ENCODE measurements at regions of chr2 and their contacts with region 1.

Region 1: GRCh38 chr2:160109936-160110673 is 47.7 kb upstream of the PLA2R1 start:
- DNase-seq: no peak
- H3K27ac ChIP-seq: peak overlapping the region; percentile 83
- CTCF ChIP-seq: peak; percentile 59

Region 2: GRCh38 chr2:160091381-160091780 is 18.7 kb before region 1 on chr2:
- CTCF ChIA-PET with region 1: interaction called, 13 read pairs
- POLR2A ChIA-PET with region 1: no interaction called
- DNase-seq: peak; percentile 92
- H3K27ac ChIP-seq: peak overlapping the region; percentile 99
- CTCF ChIP-seq: no peak

Region 3: GRCh38 chr2:160141912-160142311 is 31.8 kb after region 1 on chr2:
- CTCF ChIA-PET with region 1: no interaction called
- POLR2A ChIA-PET with region 1: no interaction called
- DNase-seq: no peak
- H3K27ac ChIP-seq: no peak overlapping the region
- CTCF ChIP-seq: no peak

Region 4: DNA sequence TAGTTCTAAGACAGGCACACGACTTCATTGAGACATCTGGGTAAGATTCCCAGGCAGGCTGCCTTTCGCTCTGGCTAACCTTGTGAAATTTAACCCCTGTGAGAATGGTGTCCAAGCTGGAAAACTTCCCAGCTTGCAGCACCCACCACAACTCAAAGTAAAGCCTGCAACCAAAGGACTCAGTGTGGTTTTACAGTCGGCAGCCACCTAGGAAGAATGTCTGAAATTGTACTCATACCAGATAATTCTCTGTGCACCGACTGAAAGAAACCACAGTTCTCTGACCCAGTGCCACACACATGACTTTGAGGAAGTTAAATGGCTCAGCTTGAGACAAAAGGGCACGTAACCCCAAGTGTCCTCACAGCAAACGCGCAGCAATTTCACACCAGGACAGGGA is 257.8 kb after region 1 on chr2:
- CTCF ChIA-PET with region 1: no interaction called
- POLR2A ChIA-PET with region 1: no interaction called
- DNase-seq: no peak
- H3K27ac ChIP-seq: peak overlapping the region; percentile 36; the same call in 1 of the 2 replicates
- CTCF ChIP-seq: no peak

Measured in RWPE1 (cell line).